Dendritic cell treated with granulocyte-macrophage colony-stimulating factor and Interleukin-4, amounts not matched to agents 40 ng/mL and 50 ng/mL, for 4 days (primary cell): ENCODE measurements at regions of chr17 and their contacts with region 1.

Region 1: GRCh38 chr17:31216053-31216751 is 80.8 kb downstream of the OMG start:
- H3K4me3 Mint-ChIP-seq: no peak overlapping the region
- H3K27ac Mint-ChIP-seq: no peak overlapping the region
- H3K4me1 Mint-ChIP-seq: no peaks in the 10 kb centered on the region
- H3K27me3 Mint-ChIP-seq: no peaks in the 10 kb centered on the region

Region 2: GRCh38 chr17:31008374-31009041 is 207.7 kb before region 1 on chr17:
- intact Hi-C with region 1: loop called (anchors 1 kb)
- H3K4me3 Mint-ChIP-seq: peak overlapping the region; percentile 81
- H3K27ac Mint-ChIP-seq: peak overlapping the region; percentile 89
- H3K4me1 Mint-ChIP-seq: peaks cover 27% of the 10 kb centered on the region
- H3K27me3 Mint-ChIP-seq: peaks cover 9% of the 10 kb centered on the region